Left cardiac atrium (tissue), 4 donors: ENCODE measurements at regions of chr12 and their contacts with region 1.

Region 1: DNA sequence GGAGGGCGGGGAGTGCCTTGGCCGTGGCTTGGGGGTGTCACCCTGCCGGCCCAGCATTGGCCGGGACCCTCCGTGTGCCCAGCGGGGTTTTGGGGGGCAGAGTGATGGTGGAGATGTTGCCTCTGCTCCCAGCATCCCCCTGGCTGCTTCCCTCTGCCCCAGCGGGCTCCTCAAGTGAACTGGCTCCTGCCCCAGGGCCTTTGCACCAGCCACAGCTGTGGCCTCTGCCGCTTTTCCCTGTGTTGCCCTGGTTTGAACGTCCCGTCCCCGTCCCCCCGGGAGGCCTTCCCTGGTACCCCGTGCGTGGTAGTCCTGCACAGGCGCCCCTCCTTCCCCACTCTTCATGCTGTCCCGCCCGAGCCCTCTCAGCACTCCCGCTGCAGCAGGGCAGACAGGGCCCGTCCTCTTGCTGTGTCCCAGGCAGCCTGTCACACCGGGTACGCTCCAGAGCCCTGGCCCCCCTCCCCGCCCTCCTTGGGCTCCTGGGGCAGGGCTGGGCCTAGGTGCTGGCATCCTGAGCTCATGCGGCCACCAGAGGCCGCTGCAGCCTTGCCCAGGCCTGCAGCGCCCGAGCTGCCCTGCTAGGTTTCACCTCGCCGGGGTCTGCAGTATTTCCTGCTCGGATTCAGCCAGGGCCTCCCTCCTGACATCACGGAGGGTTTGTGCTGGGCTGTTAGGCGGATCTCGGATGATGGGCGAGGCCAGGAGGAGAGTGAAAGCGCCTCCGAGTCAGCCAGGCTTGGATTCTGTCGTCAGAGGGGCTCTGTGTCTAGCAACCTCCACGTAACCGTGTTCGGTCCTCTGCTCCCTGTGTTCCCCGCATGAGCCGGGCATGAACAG is 9.5 kb downstream of the NOC4L start:
- DNase-seq: peak; percentile 72
- ATAC-seq: peak; percentile 91 to 94

Region 2: GRCh38 chr12:132218915-132219314 is 65.2 kb after region 1 on chr12:
- intact Hi-C with region 1: loop called in 1 of 2 experiments (anchors 10 kb)
- DNase-seq: peak; percentile 20
- ATAC-seq: no peak

Region 3: DNA sequence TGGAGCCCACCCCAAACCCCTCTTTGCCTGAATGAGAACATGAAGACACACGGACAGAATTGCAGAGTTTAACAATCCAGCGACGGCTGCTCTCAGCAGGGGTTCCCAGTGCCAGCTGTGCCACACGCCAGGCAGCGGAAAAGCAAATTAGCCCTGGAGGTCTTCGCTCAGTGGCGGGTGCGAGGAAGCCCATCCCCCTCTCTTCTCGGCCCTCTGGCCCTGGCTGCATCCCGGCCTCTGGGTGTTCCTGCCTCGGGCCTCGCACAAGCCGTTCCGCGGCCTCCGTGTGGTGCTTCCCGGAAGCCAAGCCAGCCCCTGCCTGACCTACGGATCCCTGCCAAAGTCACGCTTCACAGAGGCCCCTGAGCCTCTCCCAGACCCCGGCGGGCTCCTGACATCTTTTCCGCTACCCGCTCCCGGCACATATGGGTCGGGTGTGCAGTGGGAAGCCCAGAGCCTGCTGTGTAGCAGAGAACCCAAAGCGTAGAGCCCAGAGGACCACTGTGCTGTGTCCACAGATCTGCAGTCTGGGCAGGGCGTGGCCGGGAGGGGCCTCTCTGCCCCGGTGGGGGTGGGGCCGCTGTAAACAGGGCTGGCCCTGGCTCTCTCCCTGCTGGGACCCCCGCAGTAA is 246.4 kb after region 1 on chr12:
- intact Hi-C with region 1: loop called in 1 of 2 experiments (anchors 10 kb)
- DNase-seq: no peak
- ATAC-seq: no peak

Region 4: DNA sequence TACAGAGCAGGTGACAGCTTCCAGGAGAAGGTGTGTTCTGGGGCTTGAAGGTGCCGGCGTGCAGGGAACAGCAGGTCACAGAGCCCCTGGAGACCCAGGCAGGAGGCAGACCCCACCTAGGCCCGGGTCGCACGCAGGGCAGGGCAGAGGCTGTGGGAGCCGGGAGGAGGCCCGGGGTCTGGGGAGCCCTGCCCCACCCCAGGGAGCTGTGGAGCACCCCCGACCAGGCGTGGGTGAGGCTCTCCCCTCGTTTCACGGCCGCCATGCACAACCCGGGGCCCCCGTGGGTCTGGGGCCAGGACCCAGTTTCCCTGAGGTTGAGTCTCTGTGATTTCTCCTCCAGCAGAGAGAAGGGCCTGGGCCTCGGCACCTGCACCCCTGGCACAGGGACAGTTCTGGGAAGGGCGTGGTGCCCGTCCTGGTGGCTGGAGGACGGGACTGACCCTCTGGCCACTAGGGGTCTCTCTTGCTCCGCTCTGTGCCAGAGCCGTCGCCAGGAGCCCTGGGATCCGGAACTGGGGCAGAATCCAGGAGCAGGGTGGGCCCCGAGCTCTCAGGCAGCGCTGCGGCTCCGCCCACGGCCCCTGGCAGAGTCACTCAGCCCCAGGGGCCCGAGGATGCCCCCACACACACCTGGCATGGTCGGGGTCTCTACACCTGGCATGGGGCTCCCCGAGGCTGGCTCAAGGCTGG is 261.1 kb after region 1 on chr12:
- intact Hi-C with region 1: loop called (anchors 10 kb)
- DNase-seq: peak; percentile 82
- ATAC-seq: peak; percentile 96 to 97